CD4-positive, alpha-beta memory T cell (primary cell): ENCODE measurements at regions of chr17 and their contacts with region 1.

Region 1: DNA sequence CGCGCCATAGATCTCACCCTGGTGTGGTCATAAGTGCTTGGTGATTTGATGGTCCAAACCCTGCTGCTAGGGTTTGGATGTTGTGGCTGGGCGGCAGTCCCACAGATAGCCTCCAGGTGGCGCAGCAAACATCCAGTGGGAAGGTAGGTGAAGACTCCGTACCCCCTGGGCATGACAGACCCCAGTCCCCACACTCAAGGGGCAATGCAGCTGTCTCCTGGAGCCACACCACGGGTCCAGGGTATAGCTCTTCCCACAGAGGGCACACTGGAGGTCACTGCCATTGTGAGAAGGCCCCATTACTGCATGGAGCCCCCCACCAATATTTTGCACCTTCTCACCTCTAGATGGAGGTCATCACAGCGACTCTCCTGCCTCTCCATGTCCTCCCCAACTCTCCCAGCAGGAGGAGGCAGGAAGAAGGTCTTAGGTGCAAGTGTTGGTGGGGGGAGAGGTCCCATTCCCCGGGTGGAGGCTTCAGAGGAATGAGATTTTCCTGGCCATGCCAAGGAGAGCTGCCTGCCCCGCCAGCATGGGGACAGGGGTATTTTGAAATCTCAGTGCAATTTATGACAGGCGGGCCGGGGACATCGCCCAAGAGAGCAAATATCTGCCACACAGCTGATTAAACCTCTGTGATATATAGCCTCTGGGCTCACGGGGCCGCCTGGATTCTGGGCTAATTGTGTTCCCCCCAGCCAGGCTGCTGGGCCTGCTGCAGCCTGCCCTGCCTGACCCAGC is 17.1 kb upstream of the C17orf113 start:
- DNase-seq: peak; percentile 48 to 66 (median 59)
- H3K4me3 ChIP-seq: no peak overlapping the region
- H3K4me3 Mint-ChIP-seq: no peak overlapping the region
- H3K27ac ChIP-seq: no peak overlapping the region
- H3K27ac Mint-ChIP-seq: no peak overlapping the region
- H3K4me1 ChIP-seq: peaks cover 18% of the 10 kb centered on the region
- H3K4me1 Mint-ChIP-seq: peaks cover 2 to 8% (median 6%) of the 10 kb centered on the region in 4 donors
- H3K27me3 ChIP-seq: peaks cover 13% of the 10 kb centered on the region
- H3K27me3 Mint-ChIP-seq: peaks cover 8 to 15% of the 10 kb centered on the region in 2 donors

Region 2: DNA sequence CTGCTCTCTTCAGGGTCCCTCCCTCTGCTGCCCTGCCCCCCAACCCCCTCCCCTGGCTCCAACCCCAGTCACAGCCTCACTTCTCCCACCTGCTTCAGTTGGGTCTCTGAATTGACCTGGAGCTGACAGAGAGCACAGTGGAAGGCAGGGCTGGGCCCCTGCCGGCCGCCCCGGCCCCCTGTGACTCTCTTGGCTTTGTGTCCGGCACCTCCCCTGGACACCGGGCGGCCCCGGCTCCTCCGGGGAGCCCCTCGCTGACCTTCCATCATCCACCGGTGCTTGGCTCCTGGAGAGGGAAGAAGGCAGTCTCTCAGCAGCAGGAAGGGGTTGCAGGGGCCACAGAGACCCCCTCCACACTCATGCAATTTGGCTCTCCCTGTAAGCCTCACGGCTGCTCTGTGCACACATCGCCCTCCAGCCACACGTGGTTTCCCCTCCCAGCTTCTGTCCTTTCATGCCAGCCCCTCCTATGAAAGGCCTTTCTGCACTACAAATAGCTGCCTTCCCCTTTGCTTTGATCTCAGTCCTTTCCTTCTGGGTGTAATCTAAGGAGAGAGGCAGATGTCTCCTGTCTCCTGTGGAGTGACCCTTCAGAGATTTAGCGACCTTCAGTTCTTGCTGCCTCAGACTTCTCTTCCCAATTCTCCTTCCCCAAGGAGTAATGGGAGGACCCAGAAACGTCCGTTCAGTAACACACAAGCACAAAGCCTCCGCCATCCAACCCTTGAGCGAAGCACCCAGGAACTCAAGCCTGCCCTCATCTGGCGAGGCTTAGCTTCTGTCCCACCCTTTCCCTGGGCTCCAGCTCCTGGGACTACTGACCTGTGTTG is 39.3 kb before region 1 on chr17:
- CTCF ChIA-PET with region 1: interaction called, 8 read pairs
- POLR2A ChIA-PET with region 1: no interaction called
- intact Hi-C with region 1: loop called (anchors 1 kb)
- DNase-seq: no peak
- H3K4me3 ChIP-seq: no peak overlapping the region
- H3K4me3 Mint-ChIP-seq: no peak overlapping the region
- H3K27ac ChIP-seq: no peak overlapping the region
- H3K27ac Mint-ChIP-seq: no peak overlapping the region
- H3K4me1 ChIP-seq: peaks cover 6% of the 10 kb centered on the region
- H3K4me1 Mint-ChIP-seq: peaks cover 3 to 6% (median 5%) of the 10 kb centered on the region in 4 donors
- H3K27me3 ChIP-seq: no peaks in the 10 kb centered on the region
- H3K27me3 Mint-ChIP-seq: peaks cover 2 to 3% of the 10 kb centered on the region in 2 donors

Region 3: GRCh38 chr17:42050393-42051012 is 17.0 kb before region 1 on chr17 and contains the start of gene C17orf113:
- CTCF ChIA-PET with region 1: interaction called, 13 read pairs
- POLR2A ChIA-PET with region 1: no interaction called
- intact Hi-C with region 1: no loop called
- DNase-seq: peak; percentile 32 to 48 (median 37)
- H3K4me3 ChIP-seq: peak within 1 kb of the TSS in 1 of 2 donors; percentile 27
- H3K4me3 Mint-ChIP-seq: peak within 1 kb of the TSS; percentile 82 to 88 (median 86)
- H3K27ac ChIP-seq: no peak within 1 kb of the TSS
- H3K27ac Mint-ChIP-seq: peak within 1 kb of the TSS; percentile 50 to 83 (median 66)
- H3K4me1 ChIP-seq: peaks cover 6% of the 10 kb centered on the region
- H3K4me1 Mint-ChIP-seq: peaks cover 5 to 10% (median 7%) of the 10 kb centered on the region in 4 donors
- H3K27me3 ChIP-seq: no peaks in the 10 kb centered on the region
- H3K27me3 Mint-ChIP-seq: peaks cover 13 to 37% of the 10 kb centered on the region in 2 donors
- total RNA-seq, gene C17orf113: 0.76 to 0.97 TPM

Region 4: DNA sequence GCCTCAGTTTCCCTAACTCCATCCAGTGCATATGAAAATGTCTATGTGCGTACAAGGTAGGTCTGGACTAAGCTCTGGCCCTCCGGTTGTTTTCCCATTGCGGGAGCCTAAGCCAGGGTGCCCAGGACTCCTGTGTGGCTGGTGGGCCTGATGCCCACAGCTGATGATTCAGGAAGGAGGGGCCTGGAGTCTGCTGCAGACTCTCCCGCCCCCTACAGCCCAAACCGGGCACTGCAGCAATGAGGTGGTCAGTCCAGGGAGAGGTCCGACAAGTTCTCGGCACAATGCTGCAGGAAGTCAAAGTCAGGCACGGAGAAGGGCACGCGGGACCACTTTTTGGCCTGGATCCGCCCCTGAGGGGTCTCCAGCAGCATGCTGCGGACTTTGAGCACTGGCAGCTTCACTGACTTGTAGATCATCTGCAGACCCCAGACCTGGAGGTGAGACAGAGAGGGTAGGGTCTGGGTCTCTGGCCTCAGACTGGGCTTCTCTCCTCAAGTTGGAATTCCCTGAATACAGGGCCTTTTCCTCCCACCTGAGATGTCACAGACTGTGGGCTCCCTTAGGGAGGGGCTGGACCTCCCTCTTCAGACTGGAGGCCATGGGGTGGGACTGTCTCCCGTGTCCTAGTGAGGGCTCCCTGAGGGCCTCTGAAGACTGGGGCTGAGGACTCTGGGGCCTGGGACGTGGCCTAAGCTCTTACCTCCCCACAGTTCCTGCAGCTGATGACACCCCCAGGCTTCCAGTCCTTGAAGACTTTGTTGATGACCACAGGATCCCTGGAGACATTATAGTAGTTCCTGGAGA is 34.2 kb after region 1 on chr17:
- CTCF ChIA-PET with region 1: interaction called, 88 read pairs
- POLR2A ChIA-PET with region 1: no interaction called
- intact Hi-C with region 1: no loop called
- DNase-seq: peak in 4 of 5 donors; percentile 32 to 49 (median 37)
- H3K4me3 ChIP-seq: no peak overlapping the region
- H3K4me3 Mint-ChIP-seq: no peak overlapping the region
- H3K27ac ChIP-seq: no peak overlapping the region
- H3K27ac Mint-ChIP-seq: no peak overlapping the region
- H3K4me1 ChIP-seq: peaks cover 7% of the 10 kb centered on the region
- H3K4me1 Mint-ChIP-seq: peaks cover 2 to 12% (median 7%) of the 10 kb centered on the region in 4 donors
- H3K27me3 ChIP-seq: peaks cover 6% of the 10 kb centered on the region
- H3K27me3 Mint-ChIP-seq: peaks cover 2 to 8% of the 10 kb centered on the region in 2 donors

Region 5: GRCh38 chr17:42120770-42121769 is 53.5 kb after region 1 on chr17 and contains the start of gene KAT2A:
- CTCF ChIA-PET with region 1: interaction called, 124 read pairs
- POLR2A ChIA-PET with region 1: interaction called, 3 read pairs
- intact Hi-C with region 1: loop called (anchors 1 kb)
- DNase-seq: peak; percentile 61 to 71 (median 68)
- H3K4me3 ChIP-seq: peak within 1 kb of the TSS in 1 of 2 donors; percentile 43
- H3K4me3 Mint-ChIP-seq: peak within 1 kb of the TSS; percentile 72 to 82 (median 77)
- H3K27ac ChIP-seq: peak within 1 kb of the TSS; percentile 49
- H3K27ac Mint-ChIP-seq: peak within 1 kb of the TSS in 6 of 7 donors; percentile 19 to 81 (median 67)
- H3K4me1 ChIP-seq: peaks cover 11% of the 10 kb centered on the region
- H3K4me1 Mint-ChIP-seq: peaks cover 13 to 34% (median 23%) of the 10 kb centered on the region in 4 donors
- H3K27me3 ChIP-seq: no peaks in the 10 kb centered on the region
- H3K27me3 Mint-ChIP-seq: no peaks in the 10 kb centered on the region
- total RNA-seq, gene KAT2A: 38.5 to 39.9 TPM